ENCODE measurements at regions of chr3 and their contacts with region 1.

Region 1: GRCh38 chr3:38579551-38580449 is 69.7 kb downstream of the SCN5A start:
- DNase-seq: peak; percentile 63 to 85 (median 75)
- ATAC-seq: peak; percentile 73 to 79 (median 75)
- H3K4me3 ChIP-seq: no peak overlapping the region
- H3K27ac ChIP-seq: peak overlapping the region in 11 of 12 donors; percentile 71 to 99 (median 89)
- H3K4me1 ChIP-seq: peaks cover 0 to 85% (median 36%) of the 10 kb centered on the region in 12 donors
- H3K27me3 ChIP-seq: no peaks in the 10 kb centered on the region
- CTCF ChIP-seq: no peak
- POLR2A ChIP-seq: peak in 1 of 2 donors; percentile 0

Region 2: DNA sequence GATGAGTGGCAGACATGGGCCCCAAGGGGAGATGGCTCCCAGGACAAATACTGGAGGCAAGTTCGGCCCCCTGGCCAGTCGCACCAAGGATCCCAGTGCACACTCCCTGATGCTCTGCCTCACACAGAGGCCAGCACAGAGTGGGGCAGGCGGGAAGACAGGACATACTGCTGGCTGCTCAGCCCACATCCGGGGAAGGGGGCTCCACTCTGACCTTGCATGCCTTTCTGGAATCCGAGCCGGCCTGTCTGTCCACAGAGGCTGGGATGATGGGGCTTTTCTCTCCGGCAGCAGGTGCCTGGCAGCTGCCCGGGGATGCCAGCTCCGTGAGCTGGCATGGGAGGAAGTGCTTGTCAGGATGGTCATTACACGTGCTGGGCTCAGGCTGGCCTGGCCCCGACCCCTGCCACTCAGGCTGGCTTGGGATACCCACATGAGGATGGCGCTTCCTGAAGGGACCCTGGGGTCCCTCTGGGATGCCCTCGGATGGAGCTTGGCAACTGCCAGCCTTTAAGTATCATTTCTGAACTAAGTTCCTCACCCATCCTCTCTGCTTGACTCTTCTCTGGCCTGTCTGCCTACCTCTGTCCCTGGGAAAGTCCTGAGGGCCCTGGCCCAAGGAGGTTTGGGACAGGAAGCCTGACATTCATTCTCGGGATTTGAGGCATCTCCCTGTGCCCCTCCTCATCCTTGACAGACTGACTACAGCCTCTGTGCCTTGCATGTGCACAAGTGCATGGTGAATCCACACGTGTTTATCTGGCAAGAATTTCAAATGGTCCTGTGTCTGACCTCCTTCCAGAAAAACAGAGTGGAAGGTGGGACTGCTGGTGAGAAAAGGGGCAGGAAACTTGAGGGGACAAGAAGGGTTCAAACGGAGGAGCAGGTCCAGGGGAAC is 37.1 kb before region 1 on chr3:
- intact Hi-C with region 1: loop called in 5 of 10 experiments (anchors 2 to 5 kb)
- DNase-seq: peak in 2 of 5 donors; percentile 54 to 67
- ATAC-seq: peak in 3 of 4 donors; percentile 1 to 27 (median 19)
- H3K4me3 ChIP-seq: no peak overlapping the region
- H3K27ac ChIP-seq: peak overlapping the region; percentile 4 to 96 (median 80)
- H3K4me1 ChIP-seq: peaks cover 0 to 77% (median 37%) of the 10 kb centered on the region in 12 donors
- H3K27me3 ChIP-seq: no peaks in the 10 kb centered on the region
- CTCF ChIP-seq: no peak
- POLR2A ChIP-seq: no peak

Measured in heart left ventricle (tissue), 16 donors.